ENCODE measurements at regions of chr14 and their contacts with region 1.

Region 1: DNA sequence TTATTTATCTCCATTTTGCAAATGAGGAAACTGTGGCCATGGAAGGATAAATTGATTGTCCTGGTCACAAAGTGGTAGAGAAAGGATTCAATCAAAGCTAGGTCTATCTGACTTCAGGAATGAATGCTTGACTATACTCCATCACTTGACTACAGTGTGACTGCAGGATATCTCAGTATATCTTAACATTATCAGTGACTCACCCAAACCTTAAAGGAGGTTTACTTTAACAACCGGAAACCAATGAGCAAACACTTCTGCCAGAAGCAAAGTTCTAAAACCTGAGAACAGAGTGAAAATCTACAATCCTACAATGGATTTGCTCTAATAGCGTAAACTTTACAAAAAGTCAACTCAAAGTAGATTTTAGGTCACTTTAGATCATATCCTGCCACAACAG is 277.0 kb downstream of the CEP128 start:
- DNase-seq: peak; percentile 83
- ATAC-seq: peak; percentile 95
- H3K4me3 ChIP-seq: no peak overlapping the region
- H3K27ac ChIP-seq: no peak overlapping the region; the same call in 1 of the 2 replicates
- H3K4me1 ChIP-seq: peaks cover 6% of the 10 kb centered on the region; the same call in 1 of the 2 replicates
- H3K27me3 ChIP-seq: no peaks in the 10 kb centered on the region
- CTCF ChIP-seq: no peak
- POLR2A ChIP-seq: no peak
- RAD21 ChIP-seq: no peak

Region 2: DNA sequence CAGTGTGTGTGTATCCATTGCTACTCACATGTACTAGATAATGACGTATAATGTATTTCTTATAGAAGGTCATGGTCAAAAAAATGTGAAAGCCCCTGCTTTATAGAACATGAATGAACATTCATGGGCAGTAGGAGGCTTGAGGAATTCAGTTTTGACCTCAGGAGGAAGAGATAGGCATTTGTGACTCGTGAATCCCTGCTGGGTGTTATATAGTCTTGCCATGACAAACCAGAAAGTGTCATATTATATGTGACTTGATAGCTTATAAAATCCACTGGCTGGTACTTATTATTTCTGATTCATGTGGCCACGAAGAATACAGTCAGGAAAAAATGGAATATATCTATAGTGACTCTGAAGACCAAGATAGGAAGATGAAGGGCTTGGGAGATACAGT is 10.6 kb before region 1 on chr14:
- CTCF ChIA-PET with region 1: no interaction called
- POLR2A ChIA-PET with region 1: no interaction called
- dilution Hi-C with region 1: no loop called
- in situ Hi-C with region 1: no loop called
- intact Hi-C with region 1: loop called (anchors 1 kb)
- DNase-seq: peak; percentile 16
- ATAC-seq: no peak
- H3K4me3 ChIP-seq: no peak overlapping the region
- H3K27ac ChIP-seq: no peak overlapping the region
- H3K4me1 ChIP-seq: no peaks in the 10 kb centered on the region; the same call in 1 of the 2 replicates
- H3K27me3 ChIP-seq: no peaks in the 10 kb centered on the region
- CTCF ChIP-seq: no peak
- POLR2A ChIP-seq: no peak
- RAD21 ChIP-seq: no peak

Region 3: GRCh38 chr14:81868166-81868565 is 1203.6 kb after region 1 on chr14:
- CTCF ChIA-PET with region 1: no interaction called
- POLR2A ChIA-PET with region 1: no interaction called
- dilution Hi-C with region 1: no loop called
- in situ Hi-C with region 1: no loop called
- intact Hi-C with region 1: no loop called
- DNase-seq: no peak
- ATAC-seq: no peak
- H3K4me3 ChIP-seq: no peak overlapping the region
- H3K27ac ChIP-seq: no peak overlapping the region
- H3K4me1 ChIP-seq: no peaks in the 10 kb centered on the region
- H3K27me3 ChIP-seq: no peaks in the 10 kb centered on the region
- CTCF ChIP-seq: no peak
- POLR2A ChIP-seq: no peak
- RAD21 ChIP-seq: no peak